CD4-positive, alpha-beta memory T cell (primary cell): ENCODE measurements at regions of chr9 and their contacts with region 1.

Region 1: DNA sequence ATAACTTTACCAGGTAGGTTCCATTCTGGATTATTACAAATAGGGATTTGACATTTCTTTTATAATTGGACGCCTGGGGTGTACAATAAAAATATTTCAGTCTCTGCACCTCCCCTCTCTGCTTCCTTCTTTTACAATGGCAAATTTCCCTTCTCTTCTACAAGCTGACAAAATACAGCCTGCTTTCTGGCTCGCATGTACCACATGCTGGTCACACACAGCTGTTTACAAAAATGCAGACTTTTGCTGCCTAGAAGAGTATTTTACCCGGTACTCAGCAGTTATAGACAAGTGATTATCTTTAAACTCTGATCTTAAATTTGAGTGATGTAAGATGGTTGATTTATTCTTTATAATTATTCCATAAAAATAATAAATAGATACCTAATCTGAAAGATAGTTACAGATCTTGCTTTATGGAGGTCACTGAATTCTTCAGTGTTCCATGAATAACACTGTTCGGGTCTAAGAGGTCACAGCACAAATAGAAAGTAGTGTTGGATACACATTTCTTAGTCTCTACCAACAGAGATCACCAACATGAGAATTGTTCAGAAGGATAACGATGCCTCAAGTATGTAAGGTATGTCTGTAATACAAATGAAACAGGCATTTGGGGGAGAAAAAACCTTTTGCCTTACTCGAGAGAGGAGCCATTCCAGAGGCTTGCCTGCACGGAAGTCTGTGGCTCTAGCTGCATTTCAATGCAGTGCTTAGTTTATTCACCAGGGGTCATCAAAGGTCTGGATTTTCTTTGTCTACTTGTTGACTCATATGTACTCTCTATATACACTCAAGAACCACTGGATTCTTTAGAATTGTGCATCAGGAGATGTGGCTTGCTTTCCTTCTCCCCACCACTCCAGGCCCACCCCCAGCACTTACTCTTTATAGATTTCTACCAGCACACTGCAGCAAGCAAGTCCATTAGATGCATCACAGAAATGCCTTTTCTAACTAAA is 206.6 kb upstream of the RFX3 start:
- DNase-seq: peak in 4 of 5 donors; percentile 38 to 43 (median 39)
- H3K4me3 ChIP-seq: no peak overlapping the region
- H3K4me3 Mint-ChIP-seq: peak overlapping the region in 6 of 8 donors; percentile 3 to 72 (median 42)
- H3K27ac ChIP-seq: no peak overlapping the region
- H3K27ac Mint-ChIP-seq: peak overlapping the region in 4 of 7 donors; percentile 49 to 76 (median 55)
- H3K4me1 ChIP-seq: peaks cover 10% of the 10 kb centered on the region
- H3K4me1 Mint-ChIP-seq: peaks cover 5 to 13% (median 12%) of the 10 kb centered on the region in 4 donors
- H3K27me3 ChIP-seq: no peaks in the 10 kb centered on the region
- H3K27me3 Mint-ChIP-seq: no peaks in the 10 kb centered on the region

Region 2: GRCh38 chr9:3467593-3468219 is 264.7 kb before region 1 on chr9:
- CTCF ChIA-PET with region 1: interaction called, 3 read pairs
- POLR2A ChIA-PET with region 1: no interaction called
- intact Hi-C with region 1: loop called (anchors 5 kb)
- DNase-seq: peak; percentile 51 to 70 (median 61)
- H3K4me3 ChIP-seq: no peak overlapping the region
- H3K4me3 Mint-ChIP-seq: peak overlapping the region in 2 of 8 donors; percentile 36 to 41
- H3K27ac ChIP-seq: no peak overlapping the region
- H3K27ac Mint-ChIP-seq: peak overlapping the region in 2 of 7 donors; percentile 27 to 29
- H3K4me1 ChIP-seq: peaks cover 5% of the 10 kb centered on the region
- H3K4me1 Mint-ChIP-seq: peaks cover 4 to 8% (median 5%) of the 10 kb centered on the region in 4 donors
- H3K27me3 ChIP-seq: no peaks in the 10 kb centered on the region
- H3K27me3 Mint-ChIP-seq: no peaks in the 10 kb centered on the region

Region 3: GRCh38 chr9:3906432-3907213 is 174.3 kb after region 1 on chr9:
- CTCF ChIA-PET with region 1: no interaction called
- POLR2A ChIA-PET with region 1: no interaction called
- intact Hi-C with region 1: no loop called
- DNase-seq: no peak
- H3K4me3 ChIP-seq: no peak overlapping the region
- H3K4me3 Mint-ChIP-seq: no peak overlapping the region
- H3K27ac ChIP-seq: no peak overlapping the region
- H3K27ac Mint-ChIP-seq: no peak overlapping the region
- H3K4me1 ChIP-seq: no peaks in the 10 kb centered on the region
- H3K4me1 Mint-ChIP-seq: no peaks in the 10 kb centered on the region
- H3K27me3 ChIP-seq: no peaks in the 10 kb centered on the region
- H3K27me3 Mint-ChIP-seq: no peaks in the 10 kb centered on the region

Region 4: GRCh38 chr9:4117835-4118610 is 385.7 kb after region 1 on chr9:
- CTCF ChIA-PET with region 1: no interaction called
- POLR2A ChIA-PET with region 1: no interaction called
- intact Hi-C with region 1: loop called (anchors 5 kb)
- DNase-seq: peak in 4 of 5 donors; percentile 12 to 35 (median 22)
- H3K4me3 ChIP-seq: no peak overlapping the region
- H3K4me3 Mint-ChIP-seq: no peak overlapping the region
- H3K27ac ChIP-seq: no peak overlapping the region
- H3K27ac Mint-ChIP-seq: peak overlapping the region in 1 of 7 donors; percentile 31
- H3K4me1 ChIP-seq: no peaks in the 10 kb centered on the region
- H3K4me1 Mint-ChIP-seq: peaks cover 0 to 3% (median under 1%) of the 10 kb centered on the region in 4 donors
- H3K27me3 ChIP-seq: no peaks in the 10 kb centered on the region
- H3K27me3 Mint-ChIP-seq: no peaks in the 10 kb centered on the region

Region 5: GRCh38 chr9:4366591-4367330 is 634.4 kb after region 1 on chr9:
- CTCF ChIA-PET with region 1: interaction called, 7 read pairs
- POLR2A ChIA-PET with region 1: no interaction called
- intact Hi-C with region 1: loop called (anchors 2 kb)
- DNase-seq: peak in 3 of 5 donors; percentile 13 to 27 (median 21)
- H3K4me3 ChIP-seq: no peak overlapping the region
- H3K4me3 Mint-ChIP-seq: no peak overlapping the region
- H3K27ac ChIP-seq: no peak overlapping the region
- H3K27ac Mint-ChIP-seq: no peak overlapping the region
- H3K4me1 ChIP-seq: no peaks in the 10 kb centered on the region
- H3K4me1 Mint-ChIP-seq: no peaks in the 10 kb centered on the region
- H3K27me3 ChIP-seq: no peaks in the 10 kb centered on the region
- H3K27me3 Mint-ChIP-seq: peaks cover 1 to 4% of the 10 kb centered on the region in 2 donors

Region 6: DNA sequence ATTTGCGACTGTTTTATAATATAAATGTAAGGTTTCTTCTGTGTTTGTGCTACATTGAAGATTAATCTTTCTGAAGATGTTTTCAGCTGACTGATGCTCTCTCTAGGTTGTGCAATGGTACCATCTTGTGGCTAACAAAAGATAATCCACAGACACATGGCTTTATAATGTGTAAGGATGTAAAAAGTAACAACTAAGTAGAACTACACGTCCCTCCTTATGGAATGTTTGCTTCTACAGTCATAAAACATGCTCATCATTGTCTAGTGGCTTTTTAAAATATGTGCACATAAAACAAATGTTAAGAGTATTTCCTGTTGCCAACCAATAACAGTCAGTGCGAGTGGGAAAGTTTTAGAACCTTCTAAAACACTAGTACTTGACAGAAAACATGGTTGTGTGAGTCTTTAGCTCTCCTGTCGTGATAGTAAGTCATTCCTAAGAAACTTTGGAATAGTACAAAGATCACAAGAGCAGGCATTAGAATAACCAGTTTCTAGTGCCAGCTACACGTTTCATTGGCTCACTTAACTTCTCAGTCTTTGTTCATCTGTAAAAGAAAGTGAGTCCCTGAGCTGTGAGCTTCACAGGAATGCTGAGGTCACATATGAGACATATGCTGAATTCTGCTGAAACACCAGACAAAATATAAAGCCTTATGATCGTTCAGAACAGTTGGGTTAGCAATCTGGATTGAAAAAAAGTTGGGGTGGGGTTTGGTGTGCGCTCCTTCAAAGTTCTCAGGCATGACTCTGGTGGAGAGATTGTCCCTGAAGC is 643.3 kb after region 1 on chr9:
- CTCF ChIA-PET with region 1: no interaction called
- POLR2A ChIA-PET with region 1: no interaction called
- intact Hi-C with region 1: loop called (anchors 2 kb)
- DNase-seq: peak in 1 of 5 donors; percentile 1
- H3K4me3 ChIP-seq: no peak overlapping the region
- H3K4me3 Mint-ChIP-seq: no peak overlapping the region
- H3K27ac ChIP-seq: no peak overlapping the region
- H3K27ac Mint-ChIP-seq: no peak overlapping the region
- H3K4me1 ChIP-seq: no peaks in the 10 kb centered on the region
- H3K4me1 Mint-ChIP-seq: no peaks in the 10 kb centered on the region
- H3K27me3 ChIP-seq: no peaks in the 10 kb centered on the region
- H3K27me3 Mint-ChIP-seq: peaks cover 7 to 9% of the 10 kb centered on the region in 2 donors